Activated T-helper 1 cell treated with anti-CD3 and anti-CD28 coated beads, Interleukin-12 subunit alpha, Interleukin-12 subunit beta, Interleukin-2, Interleukin-4 antibody, amounts not matched to agents 30 ng/mL and 10 ng/mL and 1 ng/mL, durations not matched to agents 14 hours and 24 hours and 36 hours (primary cell): ENCODE measurements at regions of chr3 and their contacts with region 1.

Region 1: DNA sequence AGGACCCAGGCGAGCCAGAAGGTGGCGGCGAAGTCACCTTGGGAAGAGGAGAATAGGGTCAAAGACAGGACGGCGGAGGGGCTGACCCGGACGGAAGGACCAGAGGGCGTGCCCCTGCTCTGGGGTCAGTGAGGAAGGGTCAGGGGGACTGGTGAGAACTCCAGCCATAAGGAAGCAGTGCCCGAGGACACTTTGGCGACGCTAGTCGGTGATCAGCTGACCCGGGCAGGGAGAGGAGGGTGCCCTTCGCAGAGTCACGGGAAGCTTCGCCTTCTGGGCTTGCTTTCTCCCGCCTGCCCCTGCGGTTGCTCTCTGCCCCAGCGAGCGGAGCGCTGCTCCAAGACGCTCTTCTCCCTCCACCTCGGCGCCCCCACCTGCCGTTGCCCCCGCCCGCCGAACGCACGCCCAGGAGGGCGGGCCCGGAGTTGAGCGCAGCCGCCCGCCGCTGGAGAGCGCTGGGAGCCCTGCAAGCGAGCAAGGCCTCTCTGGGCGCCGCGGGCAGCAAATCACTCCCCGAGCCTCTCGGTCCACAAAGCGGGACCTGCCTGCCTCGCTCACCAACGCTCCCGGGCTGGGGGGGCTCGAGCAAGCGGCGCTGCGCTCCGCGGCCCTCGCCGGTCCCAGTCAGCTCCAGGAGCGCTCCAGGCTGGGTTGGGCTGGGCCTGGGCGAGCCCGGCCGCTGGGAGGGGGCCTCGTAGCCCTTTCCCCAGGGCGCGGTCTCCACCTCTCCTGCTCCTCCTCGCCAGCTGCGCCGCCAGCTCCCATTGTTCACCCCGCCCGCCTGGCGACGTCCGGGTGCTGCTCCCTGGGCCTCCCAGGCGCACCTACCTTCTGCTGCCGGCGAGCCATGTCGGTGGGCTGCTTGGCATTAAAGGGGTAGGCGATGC is 1.2 kb downstream of the CADPS start:
- DNase-seq: no peak
- H3K4me3 Mint-ChIP-seq: no peak overlapping the region
- H3K27ac Mint-ChIP-seq: no peak overlapping the region
- H3K4me1 Mint-ChIP-seq: no peaks in the 10 kb centered on the region
- H3K27me3 Mint-ChIP-seq: peaks cover 37% of the 10 kb centered on the region

Region 2: GRCh38 chr3:62374341-62375218 is 499.4 kb before region 1 on chr3:
- intact Hi-C with region 1: loop called (anchors 10 kb)
- DNase-seq: no peak
- H3K4me3 Mint-ChIP-seq: no peak overlapping the region
- H3K27ac Mint-ChIP-seq: no peak overlapping the region
- H3K4me1 Mint-ChIP-seq: no peaks in the 10 kb centered on the region
- H3K27me3 Mint-ChIP-seq: peaks cover 76% of the 10 kb centered on the region